Activated CD4-positive, alpha-beta T cell treated with anti-CD3 and anti-CD28 coated beads, Interleukin-2, amount 10 ng/mL, durations not matched to agents 7 days and 5 days (primary cell): ENCODE measurements at regions of chr10 and their contacts with region 1.

Region 1: DNA sequence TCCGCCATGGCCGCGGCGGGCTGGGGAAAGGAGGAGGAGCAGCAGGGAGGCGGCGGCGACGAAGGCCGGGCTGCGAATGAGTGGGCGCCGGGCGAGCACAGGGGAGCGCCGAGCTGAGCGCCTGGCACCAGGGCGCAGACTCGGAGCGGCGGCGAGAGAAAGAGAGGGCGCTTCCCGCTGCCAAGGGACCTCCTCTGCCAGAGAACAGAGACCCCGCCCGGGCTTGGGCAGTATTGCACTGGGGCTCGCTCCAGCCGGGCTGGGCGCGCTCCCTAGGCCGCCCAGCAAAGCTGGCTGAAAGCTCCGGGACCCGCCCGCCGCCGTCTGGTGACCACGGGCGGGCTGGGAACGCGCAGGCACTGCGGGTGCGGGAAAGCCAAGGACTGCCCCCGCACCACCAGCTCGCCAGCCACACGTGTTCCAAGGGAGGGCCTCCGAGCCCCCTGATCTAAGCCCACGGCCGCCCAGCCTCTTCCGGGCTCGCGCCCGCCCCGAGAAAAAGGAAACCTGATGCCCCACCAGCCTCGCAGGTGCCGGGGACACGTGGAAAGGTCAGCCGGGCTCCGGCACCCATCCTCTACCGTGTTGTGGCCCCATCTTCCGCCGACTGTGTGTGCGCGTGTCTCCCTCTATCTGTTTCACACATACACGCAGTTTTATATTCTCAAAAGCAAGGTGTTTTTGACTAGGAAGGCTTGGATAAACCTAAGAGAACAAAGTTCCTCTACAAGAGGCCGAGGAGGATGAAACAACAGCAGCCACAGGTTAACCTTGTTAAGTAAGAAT is at the start of gene CCDC6:
- DNase-seq: peak; percentile 92
- H3K4me3 Mint-ChIP-seq: peak within 1 kb of the TSS; percentile 92
- H3K27ac Mint-ChIP-seq: peak within 1 kb of the TSS; percentile 98
- H3K4me1 Mint-ChIP-seq: peaks cover 55% of the 10 kb centered on the region
- H3K27me3 Mint-ChIP-seq: no peaks in the 10 kb centered on the region
- total RNA-seq, gene CCDC6: 18.9 to 21.8 TPM

Region 2: GRCh38 chr10:59805014-59805413 is 101.6 kb before region 1 on chr10:
- CTCF ChIA-PET with region 1: no interaction called
- POLR2A ChIA-PET with region 1: no interaction called
- DNase-seq: no peak
- H3K4me3 Mint-ChIP-seq: no peak overlapping the region
- H3K27ac Mint-ChIP-seq: no peak overlapping the region
- H3K4me1 Mint-ChIP-seq: no peaks in the 10 kb centered on the region
- H3K27me3 Mint-ChIP-seq: no peaks in the 10 kb centered on the region

Region 3: DNA sequence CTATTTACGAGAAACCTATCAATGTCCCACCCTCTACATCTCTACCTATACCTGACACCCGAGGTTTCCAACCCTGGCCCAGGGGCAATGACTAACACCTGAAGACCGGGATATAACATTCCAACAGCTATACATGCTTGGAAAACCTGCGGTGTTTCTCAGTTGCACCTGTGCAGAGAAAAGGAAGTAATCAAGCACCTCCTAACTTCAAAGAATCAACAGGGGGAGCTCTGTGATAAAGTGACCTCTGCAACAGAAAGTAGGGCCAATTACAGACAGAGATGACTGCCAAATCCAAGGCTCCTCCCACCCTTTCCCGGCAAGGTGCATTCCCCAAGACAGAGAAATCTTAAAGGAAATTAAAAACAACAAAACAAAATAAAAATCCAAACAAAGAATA is 41.5 kb before region 1 on chr10:
- CTCF ChIA-PET with region 1: interaction called, 12 read pairs
- POLR2A ChIA-PET with region 1: no interaction called
- DNase-seq: peak; percentile 11
- H3K4me3 Mint-ChIP-seq: no peak overlapping the region
- H3K27ac Mint-ChIP-seq: no peak overlapping the region
- H3K4me1 Mint-ChIP-seq: peaks cover 22% of the 10 kb centered on the region
- H3K27me3 Mint-ChIP-seq: no peaks in the 10 kb centered on the region

Region 4: DNA sequence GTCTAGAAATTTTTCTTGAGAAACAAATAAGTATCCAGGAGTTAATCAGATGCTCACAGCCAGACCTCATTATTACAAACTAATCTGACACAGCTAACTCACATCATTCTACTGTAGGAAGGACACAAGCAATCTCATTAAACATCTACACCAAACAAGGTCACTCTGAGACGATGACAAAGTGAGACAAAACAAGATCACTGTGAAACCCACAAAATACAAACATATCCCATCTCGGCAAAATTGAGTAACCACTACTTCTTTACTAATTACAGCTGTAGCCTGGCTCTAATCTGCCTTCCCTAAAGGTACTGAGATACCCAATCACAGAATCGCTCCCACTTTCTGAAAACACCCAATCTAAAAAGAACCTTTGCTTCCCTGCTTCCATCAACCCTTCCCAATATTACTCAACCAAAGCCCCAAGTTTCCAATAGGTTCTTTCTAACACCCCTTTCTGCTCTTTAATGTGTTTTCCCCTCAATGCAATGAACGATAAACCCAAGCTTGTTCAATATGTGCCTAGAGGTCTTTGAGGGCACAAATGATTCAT is 27.2 kb before region 1 on chr10:
- CTCF ChIA-PET with region 1: interaction called, 10 read pairs
- POLR2A ChIA-PET with region 1: no interaction called
- DNase-seq: no peak
- H3K4me3 Mint-ChIP-seq: no peak overlapping the region
- H3K27ac Mint-ChIP-seq: peak overlapping the region; percentile 15
- H3K4me1 Mint-ChIP-seq: peaks cover 57% of the 10 kb centered on the region
- H3K27me3 Mint-ChIP-seq: no peaks in the 10 kb centered on the region

Region 5: GRCh38 chr10:59887972-59888663 is 18.5 kb before region 1 on chr10:
- CTCF ChIA-PET with region 1: interaction called, 16 read pairs
- POLR2A ChIA-PET with region 1: interaction called, 4 read pairs
- DNase-seq: no peak
- H3K4me3 Mint-ChIP-seq: no peak overlapping the region
- H3K27ac Mint-ChIP-seq: no peak overlapping the region
- H3K4me1 Mint-ChIP-seq: peaks cover 58% of the 10 kb centered on the region
- H3K27me3 Mint-ChIP-seq: no peaks in the 10 kb centered on the region